ENCODE measurements at regions of chr7 and their contacts with region 1.

Region 1: GRCh38 chr7:143240291-143241168 is 18.7 kb downstream of the TAS2R40 start:
- DNase-seq: peak; percentile 22 to 92 (median 80)

Region 2: DNA sequence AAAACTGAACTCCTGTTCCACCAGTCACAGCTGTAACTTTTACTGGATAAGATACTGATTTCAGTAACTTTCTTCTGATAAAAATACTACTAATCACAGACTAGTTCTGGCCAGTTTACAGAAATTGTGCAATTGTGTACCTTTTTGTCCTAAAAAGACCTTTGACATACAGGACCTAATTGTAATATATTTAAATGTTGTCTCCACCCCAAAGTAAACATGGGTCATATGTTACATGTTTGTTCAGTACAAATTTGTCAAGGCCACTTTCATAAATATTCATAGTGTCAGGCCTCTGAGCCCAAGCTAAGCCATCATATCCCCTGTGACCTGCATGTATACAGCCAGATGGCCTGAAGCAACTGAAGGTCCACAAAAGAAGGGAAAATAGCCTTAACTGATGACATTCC is 135.7 kb before region 1 on chr7:
- intact Hi-C with region 1: no loop called
- DNase-seq: no peak

Region 3: GRCh38 chr7:143305423-143306070 is 65.0 kb after region 1 on chr7:
- intact Hi-C with region 1: loop called (anchors 5 kb)
- DNase-seq: peak; percentile 50 to 93 (median 78)

Measured in head of caudate nucleus (tissue), 42 donors.